PC-3 (cell line): ENCODE measurements at regions of chr20 and their contacts with region 1.

Region 1: GRCh38 chr20:50379049-50379990 is 130.9 kb upstream of the PTPN1 start:
- DNase-seq: no peak
- ATAC-seq: no peak
- H3K4me3 ChIP-seq: no peak overlapping the region
- H3K27ac ChIP-seq: peak overlapping the region; percentile 84; the same call in 1 of the 2 replicates
- H3K4me1 ChIP-seq: peaks cover 43% of the 10 kb centered on the region
- H3K27me3 ChIP-seq: no peaks in the 10 kb centered on the region
- CTCF ChIP-seq: no peak

Region 2: GRCh38 chr20:50189681-50190582 is 189.4 kb before region 1 on chr20:
- CTCF ChIA-PET with region 1: no interaction called
- POLR2A ChIA-PET with region 1: no interaction called
- intact Hi-C with region 1: loop called (anchors 2 kb)
- DNase-seq: peak; percentile 92
- ATAC-seq: peak; percentile 39
- H3K4me3 ChIP-seq: peak overlapping the region; percentile 96
- H3K27ac ChIP-seq: peak overlapping the region; percentile 75; the same call in 1 of the 2 replicates
- H3K4me1 ChIP-seq: peaks cover 28% of the 10 kb centered on the region
- H3K27me3 ChIP-seq: no peaks in the 10 kb centered on the region
- CTCF ChIP-seq: peak; percentile 72

Region 3: GRCh38 chr20:50320910-50321796 is 58.2 kb before region 1 on chr20:
- CTCF ChIA-PET with region 1: no interaction called
- POLR2A ChIA-PET with region 1: no interaction called
- intact Hi-C with region 1: loop called (anchors 5 kb)
- DNase-seq: peak; percentile 98
- ATAC-seq: peak; percentile 98
- H3K4me3 ChIP-seq: peak overlapping the region; percentile 57
- H3K27ac ChIP-seq: peak overlapping the region; percentile 93
- H3K4me1 ChIP-seq: peaks cover 25% of the 10 kb centered on the region
- H3K27me3 ChIP-seq: no peaks in the 10 kb centered on the region
- CTCF ChIP-seq: no peak

Region 4: GRCh38 chr20:50364542-50364941 is 14.8 kb before region 1 on chr20:
- CTCF ChIA-PET with region 1: no interaction called
- POLR2A ChIA-PET with region 1: no interaction called
- intact Hi-C with region 1: no loop called
- DNase-seq: no peak
- ATAC-seq: no peak
- H3K4me3 ChIP-seq: no peak overlapping the region
- H3K27ac ChIP-seq: no peak overlapping the region
- H3K4me1 ChIP-seq: peaks cover 21% of the 10 kb centered on the region
- H3K27me3 ChIP-seq: no peaks in the 10 kb centered on the region
- CTCF ChIP-seq: no peak

Region 5: GRCh38 chr20:50400705-50401586 is 21.6 kb after region 1 on chr20:
- CTCF ChIA-PET with region 1: interaction called, 13 read pairs
- POLR2A ChIA-PET with region 1: no interaction called
- intact Hi-C with region 1: no loop called
- DNase-seq: no peak
- ATAC-seq: no peak
- H3K4me3 ChIP-seq: no peak overlapping the region
- H3K27ac ChIP-seq: no peak overlapping the region
- H3K4me1 ChIP-seq: peaks cover 17% of the 10 kb centered on the region
- H3K27me3 ChIP-seq: no peaks in the 10 kb centered on the region
- CTCF ChIP-seq: no peak

Region 6: DNA sequence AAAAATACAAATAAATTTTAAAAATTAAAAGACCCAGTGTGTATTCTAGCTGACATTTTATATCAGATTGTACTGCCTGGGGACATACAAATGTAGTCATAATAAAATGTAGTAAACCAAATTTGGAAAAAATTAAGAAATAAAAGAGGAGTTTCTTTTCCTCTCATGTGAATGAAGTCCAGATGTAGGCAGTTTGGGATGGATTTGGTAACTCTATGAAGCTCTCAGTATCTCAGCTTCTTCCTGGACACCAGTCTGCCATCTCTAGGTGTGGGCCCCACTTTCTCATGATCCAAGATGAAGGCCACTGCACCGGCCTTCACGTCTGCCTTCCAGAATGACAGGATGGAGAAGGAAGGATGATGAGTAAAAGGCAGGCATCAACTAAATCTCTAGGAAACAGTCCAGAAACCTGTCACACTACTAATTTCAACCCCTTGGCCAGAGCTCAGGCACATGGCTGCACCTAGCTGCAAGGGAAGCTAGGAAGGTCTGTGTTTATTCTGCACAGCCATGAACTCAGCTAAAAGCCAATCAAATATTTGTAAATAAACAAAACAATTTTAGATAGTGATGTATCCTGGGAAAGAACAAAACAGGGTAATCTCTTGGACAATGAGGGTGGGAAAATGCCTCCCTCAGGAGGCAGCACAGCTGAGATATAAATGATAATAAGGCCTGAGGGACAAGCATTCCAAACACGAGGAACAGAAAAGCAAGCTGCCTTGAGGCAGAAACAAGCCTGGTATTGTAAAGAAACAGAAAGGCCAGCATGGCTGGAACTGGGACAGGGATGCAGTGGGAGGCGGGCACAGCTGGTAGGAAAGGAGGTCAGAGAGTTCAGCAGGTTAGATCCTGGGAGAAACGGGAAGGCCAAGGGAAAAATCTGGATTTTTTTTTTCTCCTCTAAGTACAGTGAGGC is 42.3 kb after region 1 on chr20:
- CTCF ChIA-PET with region 1: no interaction called
- POLR2A ChIA-PET with region 1: no interaction called
- intact Hi-C with region 1: loop called (anchors 5 kb)
- DNase-seq: no peak
- ATAC-seq: no peak
- H3K4me3 ChIP-seq: no peak overlapping the region
- H3K27ac ChIP-seq: peak overlapping the region; percentile 96
- H3K4me1 ChIP-seq: peaks cover 34% of the 10 kb centered on the region
- H3K27me3 ChIP-seq: no peaks in the 10 kb centered on the region
- CTCF ChIP-seq: no peak

Region 7: DNA sequence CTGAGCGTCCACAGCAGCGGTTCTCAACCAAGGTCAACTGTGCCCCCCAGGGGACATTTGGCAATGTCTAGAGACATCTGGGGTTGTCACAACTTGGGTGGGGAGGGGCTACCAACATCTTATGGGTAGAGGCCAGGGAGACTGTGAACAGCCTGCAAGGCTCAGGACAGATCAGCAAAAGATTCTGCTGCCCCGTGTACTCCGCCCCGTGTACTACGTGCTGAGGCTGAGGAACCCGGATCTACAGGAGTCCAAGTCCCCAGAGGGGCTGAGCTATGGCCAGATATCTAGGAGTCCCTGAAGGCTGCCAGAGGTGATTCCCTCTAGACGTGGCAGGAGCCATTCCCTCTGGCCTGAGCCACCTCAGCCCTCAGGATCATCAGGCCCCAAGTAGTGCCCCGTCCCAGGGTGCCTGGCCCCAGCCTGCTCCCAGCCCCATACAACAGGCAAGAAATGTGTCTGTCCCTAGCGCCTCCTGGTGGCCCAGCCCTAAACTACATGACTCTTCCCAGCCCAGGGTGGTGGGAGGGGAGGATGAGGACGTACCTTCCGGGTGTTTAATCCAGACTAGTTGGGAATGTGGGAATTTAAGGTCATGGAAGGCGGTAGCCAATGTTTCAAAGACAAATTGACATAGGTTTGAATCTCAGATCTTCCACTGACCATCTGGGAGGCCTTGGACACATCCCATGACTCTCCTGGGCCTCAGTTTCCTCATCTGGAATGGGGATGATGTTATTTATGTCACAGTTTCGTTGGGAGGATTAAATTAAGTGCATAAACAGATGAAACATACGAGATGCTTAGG is 81.3 kb after region 1 on chr20:
- CTCF ChIA-PET with region 1: no interaction called
- POLR2A ChIA-PET with region 1: no interaction called
- intact Hi-C with region 1: loop called (anchors 5 kb)
- DNase-seq: peak; percentile 97
- ATAC-seq: peak; percentile 91
- H3K4me3 ChIP-seq: no peak overlapping the region
- H3K27ac ChIP-seq: no peak overlapping the region
- H3K4me1 ChIP-seq: peaks cover 7% of the 10 kb centered on the region; the same call in 1 of the 2 replicates
- H3K27me3 ChIP-seq: no peaks in the 10 kb centered on the region
- CTCF ChIP-seq: peak; percentile 98